Common myeloid progenitor, CD34-positive (primary cell): ENCODE measurements at regions of chr7 and their contacts with region 1.

Region 1: GRCh38 chr7:101217388-101218235 is at the starts of genes PLOD3 and ZNHIT1:
- DNase-seq: peak; percentile 97 to 99 (median 98)
- H3K4me3 ChIP-seq: peak within 1 kb of the TSS; percentile 71 to 98 (median 94)
- H3K27ac ChIP-seq: peak within 1 kb of the TSS; percentile 83 to 94
- H3K4me1 ChIP-seq: peaks cover 3 to 29% (median 25%) of the 10 kb centered on the region in 4 experiments
- H3K27me3 ChIP-seq: no peaks in the 10 kb centered on the region

Region 2: DNA sequence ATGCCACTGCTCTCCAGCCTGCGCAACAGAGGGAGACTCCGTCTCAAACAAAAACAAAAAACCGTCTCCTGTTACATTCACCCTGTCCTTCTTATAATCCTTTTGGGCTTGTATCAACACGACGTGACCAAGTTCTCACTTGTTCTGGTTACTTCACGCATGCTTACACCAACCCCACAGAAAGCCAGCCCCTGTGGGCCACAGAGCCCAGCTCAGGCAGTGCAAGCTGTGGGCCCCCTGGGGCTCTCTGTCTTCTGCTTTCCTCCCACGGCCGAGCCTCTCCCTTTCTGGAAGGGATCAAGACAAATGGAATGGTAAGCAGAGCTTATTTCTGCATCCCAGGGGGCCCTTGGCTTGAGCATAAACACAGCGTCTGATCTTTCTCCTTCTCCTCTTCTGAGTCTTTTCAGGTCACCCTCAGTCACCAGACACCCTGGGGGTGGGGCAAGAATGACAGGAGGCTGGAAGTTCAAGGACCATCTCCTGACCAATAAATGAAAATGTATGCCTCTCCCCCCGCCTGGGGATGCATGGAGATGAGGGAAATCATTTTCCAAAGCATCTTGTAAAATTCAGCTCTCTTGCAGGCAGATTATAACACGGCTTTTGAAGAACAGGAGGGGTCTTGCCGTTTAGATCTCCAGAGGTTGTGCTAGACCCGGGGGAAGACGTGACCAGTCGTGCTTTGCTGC is 151.3 kb before region 1 on chr7:
- CTCF ChIA-PET with region 1: no interaction called
- POLR2A ChIA-PET with region 1: no interaction called
- DNase-seq: no peak
- H3K4me3 ChIP-seq: no peak overlapping the region
- H3K27ac ChIP-seq: no peak overlapping the region
- H3K4me1 ChIP-seq: no peaks in the 10 kb centered on the region
- H3K27me3 ChIP-seq: peaks cover 0 to 34% (median 3%) of the 10 kb centered on the region in 5 experiments

Region 3: GRCh38 chr7:101197991-101198390 is 19.6 kb before region 1 on chr7:
- CTCF ChIA-PET with region 1: interaction called, 13 read pairs
- POLR2A ChIA-PET with region 1: no interaction called
- DNase-seq: no peak
- H3K4me3 ChIP-seq: no peak overlapping the region
- H3K27ac ChIP-seq: no peak overlapping the region
- H3K4me1 ChIP-seq: peaks cover 0 to 8% (median 6%) of the 10 kb centered on the region in 4 experiments
- H3K27me3 ChIP-seq: peaks cover 0 to 47% (median 19%) of the 10 kb centered on the region in 5 experiments

Region 4: DNA sequence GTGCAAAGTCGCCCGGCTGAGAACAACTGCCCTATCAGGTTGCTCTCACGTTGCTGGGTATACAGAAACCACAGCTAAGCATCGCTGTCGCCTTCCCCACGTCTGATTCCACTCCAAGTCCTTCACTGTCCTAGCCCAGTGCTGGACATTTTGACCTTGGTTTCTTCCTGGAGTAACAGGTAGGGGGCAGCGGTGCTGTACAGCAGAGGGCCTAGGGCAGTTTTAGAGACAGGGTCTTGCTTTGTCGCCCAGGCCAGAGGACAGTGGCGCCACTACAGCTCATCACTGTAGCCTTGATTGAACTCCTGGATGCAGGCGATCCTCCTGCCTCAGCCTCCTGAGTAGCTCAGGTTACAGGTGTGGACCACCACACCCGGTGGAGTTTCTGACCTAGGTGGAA is 17.4 kb after region 1 on chr7:
- CTCF ChIA-PET with region 1: interaction called, 24 read pairs
- POLR2A ChIA-PET with region 1: interaction called, 3 read pairs
- DNase-seq: peak in 2 of 3 donors; percentile 35 to 44
- H3K4me3 ChIP-seq: peak overlapping the region in 3 of 7 experiments; percentile 77 to 80 (median 79)
- H3K27ac ChIP-seq: no peak overlapping the region
- H3K4me1 ChIP-seq: peaks cover 2 to 57% (median 53%) of the 10 kb centered on the region in 4 experiments
- H3K27me3 ChIP-seq: no peaks in the 10 kb centered on the region

Region 5: GRCh38 chr7:101244375-101245146 is 26.9 kb after region 1 on chr7 and contains the start of gene FIS1:
- CTCF ChIA-PET with region 1: interaction called, 57 read pairs
- POLR2A ChIA-PET with region 1: interaction called, 12 read pairs
- DNase-seq: peak; percentile 89 to 94 (median 92)
- H3K4me3 ChIP-seq: peak within 1 kb of the TSS; percentile 79 to 97 (median 92)
- H3K27ac ChIP-seq: peak within 1 kb of the TSS; percentile 79 to 90
- H3K4me1 ChIP-seq: peaks cover 0 to 52% (median 46%) of the 10 kb centered on the region in 4 experiments
- H3K27me3 ChIP-seq: no peaks in the 10 kb centered on the region

Region 6: GRCh38 chr7:101294039-101294831 is 76.6 kb after region 1 on chr7:
- CTCF ChIA-PET with region 1: no interaction called
- POLR2A ChIA-PET with region 1: no interaction called
- DNase-seq: no peak
- H3K4me3 ChIP-seq: no peak overlapping the region
- H3K27ac ChIP-seq: no peak overlapping the region
- H3K4me1 ChIP-seq: no peaks in the 10 kb centered on the region
- H3K27me3 ChIP-seq: peaks cover 0 to 58% (median 10%) of the 10 kb centered on the region in 5 experiments

Region 7: GRCh38 chr7:101333912-101334311 is 116.3 kb after region 1 on chr7:
- CTCF ChIA-PET with region 1: no interaction called
- POLR2A ChIA-PET with region 1: no interaction called
- DNase-seq: peak in 2 of 3 donors; percentile 30 to 55
- H3K4me3 ChIP-seq: no peak overlapping the region
- H3K27ac ChIP-seq: no peak overlapping the region
- H3K4me1 ChIP-seq: no peaks in the 10 kb centered on the region
- H3K27me3 ChIP-seq: peaks cover 0 to 2% (median 0%) of the 10 kb centered on the region in 5 experiments

Region 8: GRCh38 chr7:101363734-101364374 is 146.2 kb after region 1 on chr7:
- CTCF ChIA-PET with region 1: no interaction called
- POLR2A ChIA-PET with region 1: no interaction called
- DNase-seq: peak; percentile 72 to 86 (median 84)
- H3K4me3 ChIP-seq: peak overlapping the region in 6 of 7 experiments; percentile 25 to 74 (median 50)
- H3K27ac ChIP-seq: no peak overlapping the region
- H3K4me1 ChIP-seq: peaks cover 0 to 16% (median 9%) of the 10 kb centered on the region in 4 experiments
- H3K27me3 ChIP-seq: peaks cover 0 to 32% (median 11%) of the 10 kb centered on the region in 5 experiments